ENCODE measurements at regions of chr16 and their contacts with region 1.

Region 1: GRCh38 chr16:23435500-23435899 is 17.5 kb downstream of the COG7 start:
- DNase-seq: peak; percentile 73 to 74
- ATAC-seq: peak; percentile 94 to 99
- H3K4me3 ChIP-seq: no peak overlapping the region
- H3K27ac ChIP-seq: no peak overlapping the region
- H3K4me1 ChIP-seq: no peaks in the 10 kb centered on the region
- CTCF ChIP-seq: peak; percentile 91
- EP300 ChIP-seq: no peak
- POLR2A ChIP-seq: no peak
- RAD21 ChIP-seq: peak; percentile 65 to 77

Region 2: GRCh38 chr16:23174622-23175021 is 260.9 kb before region 1 on chr16:
- CTCF ChIA-PET with region 1: interaction called, 336 read pairs
- POLR2A ChIA-PET with region 1: no interaction called
- DNase-seq: no peak
- ATAC-seq: no peak
- H3K4me3 ChIP-seq: no peak overlapping the region
- H3K27ac ChIP-seq: no peak overlapping the region
- H3K4me1 ChIP-seq: peaks cover 4% of the 10 kb centered on the region; the same call in 1 of the 3 replicates
- CTCF ChIP-seq: no peak
- EP300 ChIP-seq: no peak
- POLR2A ChIP-seq: no peak
- RAD21 ChIP-seq: no peak

Region 3: GRCh38 chr16:23252310-23252709 is 183.2 kb before region 1 on chr16:
- CTCF ChIA-PET with region 1: interaction called, 11 read pairs
- POLR2A ChIA-PET with region 1: no interaction called
- DNase-seq: no peak
- ATAC-seq: no peak
- H3K4me3 ChIP-seq: no peak overlapping the region
- H3K27ac ChIP-seq: no peak overlapping the region
- H3K4me1 ChIP-seq: no peaks in the 10 kb centered on the region
- CTCF ChIP-seq: no peak
- EP300 ChIP-seq: no peak
- POLR2A ChIP-seq: no peak
- RAD21 ChIP-seq: no peak

Region 4: DNA sequence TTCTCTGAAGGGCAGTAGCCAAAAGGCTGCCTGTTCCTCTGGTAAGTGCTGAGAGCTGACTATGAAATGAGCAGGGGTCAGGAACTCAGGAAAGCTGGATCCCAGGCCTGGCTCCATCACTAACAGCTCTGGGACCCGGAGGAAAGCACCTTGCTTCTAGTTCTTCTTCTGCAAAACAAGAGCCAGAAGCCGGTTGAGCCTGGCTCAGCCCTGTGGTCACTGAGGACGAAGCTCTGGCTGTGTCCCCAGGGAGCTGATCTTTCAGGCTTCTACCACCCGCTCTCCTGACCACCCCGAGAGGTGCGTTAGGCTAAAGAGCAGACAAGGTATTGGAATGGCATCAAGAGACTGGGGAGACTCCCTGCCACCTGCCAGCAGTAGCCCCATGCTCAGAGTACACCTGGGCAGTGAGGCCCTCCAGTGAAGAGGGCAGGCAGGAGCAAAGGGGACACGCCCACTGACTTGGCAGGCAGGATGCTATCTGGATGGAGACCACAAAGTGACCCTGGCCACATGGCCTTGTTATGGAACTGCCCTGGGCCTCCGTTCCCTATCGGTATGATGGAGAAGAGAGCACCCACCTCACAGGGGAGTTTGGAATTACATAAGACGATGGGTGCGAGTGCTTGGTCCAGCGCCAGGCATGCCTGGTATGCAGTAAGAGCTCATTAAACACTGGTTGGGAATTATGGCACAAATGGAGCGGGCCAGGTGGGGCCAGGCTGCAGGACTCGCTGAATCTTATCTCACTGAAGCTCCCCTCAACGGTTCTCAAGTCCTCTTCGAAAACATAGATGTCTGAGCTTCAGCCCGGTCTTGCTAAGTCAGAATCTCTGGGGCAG is 43.9 kb before region 1 on chr16:
- CTCF ChIA-PET with region 1: interaction called, 23 read pairs
- POLR2A ChIA-PET with region 1: no interaction called
- DNase-seq: no peak
- ATAC-seq: no peak
- H3K4me3 ChIP-seq: no peak overlapping the region
- H3K27ac ChIP-seq: no peak overlapping the region
- H3K4me1 ChIP-seq: no peaks in the 10 kb centered on the region
- CTCF ChIP-seq: no peak
- EP300 ChIP-seq: no peak
- POLR2A ChIP-seq: no peak
- RAD21 ChIP-seq: no peak

Region 5: GRCh38 chr16:23414731-23415130 is 20.8 kb before region 1 on chr16:
- CTCF ChIA-PET with region 1: interaction called, 31 read pairs
- POLR2A ChIA-PET with region 1: no interaction called
- DNase-seq: no peak
- ATAC-seq: no peak
- H3K4me3 ChIP-seq: no peak overlapping the region
- H3K27ac ChIP-seq: no peak overlapping the region
- H3K4me1 ChIP-seq: peaks cover 19% of the 10 kb centered on the region; the same call in 2 of the 3 replicates
- CTCF ChIP-seq: no peak
- EP300 ChIP-seq: no peak
- POLR2A ChIP-seq: no peak
- RAD21 ChIP-seq: no peak

Region 6: GRCh38 chr16:23464196-23464595 is 28.7 kb after region 1 on chr16:
- CTCF ChIA-PET with region 1: interaction called, 10 read pairs
- POLR2A ChIA-PET with region 1: no interaction called
- DNase-seq: no peak
- ATAC-seq: no peak
- H3K4me3 ChIP-seq: no peak overlapping the region
- H3K27ac ChIP-seq: no peak overlapping the region
- H3K4me1 ChIP-seq: peaks cover 13% of the 10 kb centered on the region
- CTCF ChIP-seq: no peak
- EP300 ChIP-seq: no peak
- POLR2A ChIP-seq: no peak
- RAD21 ChIP-seq: no peak

Region 7: DNA sequence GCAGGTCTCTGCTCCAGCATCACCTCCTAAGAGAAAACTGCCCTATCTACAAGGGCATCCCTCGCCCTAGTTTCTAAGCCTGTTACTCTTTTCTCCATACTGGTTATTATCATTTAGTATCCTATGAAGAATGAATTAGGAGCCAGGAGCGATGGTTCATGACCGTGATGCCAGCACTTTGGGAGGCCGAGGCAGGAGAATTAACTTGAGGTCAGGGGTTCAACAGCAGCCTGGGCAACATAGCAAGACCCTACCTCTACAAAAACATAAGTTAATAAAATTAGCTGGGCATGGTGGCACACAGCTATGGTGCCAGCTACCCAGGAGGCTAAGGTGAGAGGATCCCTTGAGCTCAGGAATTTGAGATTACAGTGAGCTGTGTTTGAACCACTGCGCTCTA is 114.4 kb after region 1 on chr16:
- CTCF ChIA-PET with region 1: no interaction called
- POLR2A ChIA-PET with region 1: no interaction called
- DNase-seq: no peak
- ATAC-seq: no peak
- H3K4me3 ChIP-seq: no peak overlapping the region
- H3K27ac ChIP-seq: no peak overlapping the region
- H3K4me1 ChIP-seq: no peaks in the 10 kb centered on the region
- CTCF ChIP-seq: no peak
- EP300 ChIP-seq: no peak
- POLR2A ChIP-seq: no peak
- RAD21 ChIP-seq: no peak

Region 8: DNA sequence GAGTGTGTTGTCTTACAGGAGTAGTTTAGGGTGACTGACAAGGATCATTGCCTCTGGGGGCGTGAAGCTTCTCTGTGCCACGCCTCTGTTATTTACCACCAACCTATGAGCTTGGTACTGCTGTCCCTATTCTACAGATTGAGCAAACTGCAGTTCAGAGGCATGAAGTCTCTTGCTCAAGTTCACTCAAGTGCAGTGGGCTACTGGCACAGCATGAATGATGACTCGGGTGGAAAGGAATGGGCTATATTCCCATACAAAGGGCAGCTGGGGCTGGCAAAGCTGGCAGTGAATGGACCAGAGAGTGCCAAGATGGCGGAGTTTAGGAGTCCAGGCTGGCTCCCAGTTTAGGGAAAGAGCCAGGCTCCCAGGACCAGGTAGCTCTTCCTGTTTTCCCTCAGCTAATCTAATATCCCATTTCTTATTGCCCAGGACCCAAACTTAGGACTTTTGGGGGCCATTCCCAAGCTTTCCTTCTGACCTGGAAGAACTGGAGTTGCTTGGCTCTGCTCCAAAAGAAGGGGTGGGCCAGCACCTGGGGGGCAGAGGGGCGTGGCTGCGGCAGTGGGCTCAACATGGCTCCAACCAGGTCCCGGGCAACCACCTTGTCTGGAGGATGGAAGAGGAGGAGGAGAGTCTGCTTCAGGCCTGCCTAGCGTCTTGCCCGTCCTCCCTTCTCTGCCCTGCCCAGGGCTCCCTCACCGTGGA is 256.1 kb after region 1 on chr16:
- CTCF ChIA-PET with region 1: no interaction called
- POLR2A ChIA-PET with region 1: no interaction called
- DNase-seq: peak in 1 of 2 experiments; percentile 25
- ATAC-seq: peak in 1 of 2 experiments; percentile 44; a peak in 3 of 6 replicates
- H3K4me3 ChIP-seq: no peak overlapping the region
- H3K27ac ChIP-seq: 0 out of 6 replicates have a peak overlapping the region, but pooled peaks of 1 of the 2 experiments have one; percentile 17
- H3K4me1 ChIP-seq: 0 out of 3 replicates have a peak, but pooled peaks cover 3% of the 10 kb centered on the region
- CTCF ChIP-seq: no peak
- EP300 ChIP-seq: no peak
- POLR2A ChIP-seq: no peak
- RAD21 ChIP-seq: no peak

Measured in A549 (cell line).